Activated naive CD4-positive, alpha-beta T cell treated with anti-CD3 and anti-CD28 coated beads, Interleukin-2, amount 10 ng/mL, durations not matched to agents 7 days and 5 days (primary cell): ENCODE measurements at regions of chr17 and their contacts with region 1.

Region 1: DNA sequence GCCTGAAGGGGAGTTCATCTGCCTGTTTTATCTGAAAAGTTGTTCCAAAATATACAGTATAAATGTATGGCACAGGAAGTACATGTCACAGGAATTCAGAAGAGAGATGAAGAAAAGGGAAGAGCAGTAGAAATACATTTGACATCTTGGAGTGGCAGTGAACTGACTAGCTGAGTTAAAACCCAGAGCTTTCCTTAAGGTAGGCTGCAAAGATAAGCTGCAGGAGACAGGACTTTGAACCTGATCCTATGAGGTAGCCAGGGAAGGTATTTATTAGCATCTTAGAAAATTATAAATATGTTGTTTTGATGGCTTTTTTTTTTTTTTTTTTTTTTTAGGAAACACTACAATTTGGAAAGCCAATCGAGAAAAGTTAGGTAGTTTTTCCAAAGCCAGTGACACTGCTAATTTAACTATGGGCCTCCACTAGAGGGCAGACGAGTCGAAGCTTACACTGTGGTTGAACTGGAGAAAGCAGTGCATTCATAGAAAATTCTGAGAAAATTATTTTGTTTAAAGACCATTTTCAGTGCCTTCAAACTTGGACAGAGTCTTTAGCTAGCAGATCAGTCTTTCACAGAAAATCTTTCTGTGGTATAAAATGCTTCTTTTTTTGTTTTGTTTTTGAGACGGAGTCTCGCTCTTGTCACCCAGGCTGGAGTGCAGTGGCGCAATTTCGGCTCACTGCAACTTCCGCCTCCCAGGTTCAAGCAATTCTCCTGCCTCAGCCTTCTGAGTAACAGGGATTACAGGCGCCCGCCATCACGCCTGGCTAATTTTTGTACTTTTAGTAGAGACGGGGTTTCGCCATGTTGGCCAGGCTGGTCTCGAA is 122.3 kb downstream of the SSH2 start:
- DNase-seq: peak; percentile 83
- H3K4me3 Mint-ChIP-seq: no peak overlapping the region
- H3K27ac Mint-ChIP-seq: no peak overlapping the region
- H3K4me1 Mint-ChIP-seq: peaks cover 26% of the 10 kb centered on the region
- H3K27me3 Mint-ChIP-seq: no peaks in the 10 kb centered on the region

Region 2: DNA sequence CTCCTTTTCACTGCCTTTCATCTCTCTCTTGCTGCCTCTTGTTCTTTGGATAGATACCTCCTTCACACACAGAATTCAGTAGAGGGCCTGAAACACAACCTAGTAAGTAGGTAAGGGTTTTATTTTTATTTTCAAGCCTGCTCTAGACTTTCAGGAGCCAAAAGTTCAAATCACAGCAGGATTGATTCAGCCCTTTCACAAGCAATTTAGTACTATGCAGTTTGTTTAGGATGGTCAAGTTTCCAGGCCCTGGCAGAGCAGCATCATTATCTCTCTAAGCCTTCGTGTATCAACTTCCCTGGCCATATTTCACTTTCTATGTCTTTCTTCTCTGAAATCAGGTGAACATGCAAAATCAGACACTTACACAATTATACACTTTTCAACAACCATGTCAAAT is 36.2 kb before region 1 on chr17:
- CTCF ChIA-PET with region 1: no interaction called
- DNase-seq: no peak
- H3K4me3 Mint-ChIP-seq: no peak overlapping the region
- H3K27ac Mint-ChIP-seq: no peak overlapping the region
- H3K4me1 Mint-ChIP-seq: no peaks in the 10 kb centered on the region
- H3K27me3 Mint-ChIP-seq: no peaks in the 10 kb centered on the region

Region 3: DNA sequence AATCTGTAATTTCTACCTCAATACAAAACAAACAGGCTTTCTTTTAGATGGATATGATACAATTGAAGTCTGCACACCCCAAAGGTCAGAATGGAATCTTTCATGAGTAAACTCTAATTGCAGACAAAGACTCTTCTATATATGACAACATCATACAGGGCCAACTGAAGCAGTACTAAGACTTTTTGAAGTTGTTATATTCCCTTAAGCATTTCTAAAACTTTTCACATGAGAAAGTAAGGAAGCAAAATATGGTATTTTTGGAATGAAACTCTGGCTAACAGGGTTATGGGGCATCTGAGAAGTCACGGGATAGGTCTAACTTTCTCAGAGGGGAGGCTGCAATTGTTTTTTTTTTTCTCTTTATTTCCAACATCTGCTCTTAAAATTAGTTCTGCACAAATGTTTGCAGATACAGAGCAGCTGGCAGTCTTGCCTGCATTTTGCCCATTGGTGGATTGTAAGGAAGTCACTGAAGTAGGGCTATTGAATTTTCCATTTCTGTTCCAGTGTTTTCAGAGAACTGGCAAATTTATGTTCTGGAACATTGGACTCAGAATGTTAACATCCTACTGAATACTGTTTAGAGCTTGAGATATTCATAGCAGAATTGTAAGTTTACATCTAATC is 63.2 kb after region 1 on chr17:
- CTCF ChIA-PET with region 1: no interaction called
- DNase-seq: no peak
- H3K4me3 Mint-ChIP-seq: no peak overlapping the region
- H3K27ac Mint-ChIP-seq: no peak overlapping the region
- H3K4me1 Mint-ChIP-seq: peaks cover 9% of the 10 kb centered on the region
- H3K27me3 Mint-ChIP-seq: no peaks in the 10 kb centered on the region

Region 4: DNA sequence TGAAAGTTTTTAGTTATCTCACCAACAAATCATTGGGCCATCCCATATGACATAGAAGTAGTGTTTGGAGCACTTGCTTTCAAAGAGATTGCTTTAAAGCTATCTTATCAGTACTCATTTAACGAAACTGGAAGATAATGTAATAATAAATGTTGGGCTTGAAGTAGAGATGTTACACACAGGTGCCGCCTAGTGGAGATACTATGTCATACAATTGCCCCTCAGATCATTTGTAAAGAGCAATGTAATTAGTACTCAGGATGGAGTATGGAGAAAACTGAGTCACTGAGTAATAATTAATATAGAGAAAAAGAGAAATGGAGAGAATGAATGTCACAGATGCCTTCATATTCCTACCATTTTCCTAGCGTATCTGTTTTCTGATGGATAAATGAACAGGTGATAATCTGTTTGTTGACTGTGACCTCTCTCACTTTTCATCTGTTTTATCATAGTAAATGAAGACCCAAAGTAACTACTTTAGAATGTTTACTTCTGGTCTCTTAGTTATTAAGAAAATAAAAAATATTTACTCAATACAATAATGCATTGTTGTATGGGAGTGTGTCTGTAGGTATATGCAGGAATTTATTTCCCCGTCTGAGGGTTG is 214.1 kb after region 1 on chr17:
- CTCF ChIA-PET with region 1: interaction called, 19 read pairs
- DNase-seq: peak; percentile 56
- H3K4me3 Mint-ChIP-seq: no peak overlapping the region
- H3K27ac Mint-ChIP-seq: no peak overlapping the region
- H3K4me1 Mint-ChIP-seq: no peaks in the 10 kb centered on the region
- H3K27me3 Mint-ChIP-seq: peaks cover 8% of the 10 kb centered on the region